Activated CD4-positive, alpha-beta memory T cell treated with anti-CD3 and anti-CD28 coated beads for 36 hours (primary cell): ENCODE measurements at regions of chr2 and their contacts with region 1.

Region 1: GRCh38 chr2:105671156-105671555 is 73.6 kb upstream of the NCK2 start:
- DNase-seq: no peak
- H3K4me3 Mint-ChIP-seq: no peak overlapping the region
- H3K27ac Mint-ChIP-seq: no peak overlapping the region
- H3K4me1 Mint-ChIP-seq: peaks cover 20% of the 10 kb centered on the region
- H3K27me3 Mint-ChIP-seq: peaks cover 3% of the 10 kb centered on the region

Region 2: DNA sequence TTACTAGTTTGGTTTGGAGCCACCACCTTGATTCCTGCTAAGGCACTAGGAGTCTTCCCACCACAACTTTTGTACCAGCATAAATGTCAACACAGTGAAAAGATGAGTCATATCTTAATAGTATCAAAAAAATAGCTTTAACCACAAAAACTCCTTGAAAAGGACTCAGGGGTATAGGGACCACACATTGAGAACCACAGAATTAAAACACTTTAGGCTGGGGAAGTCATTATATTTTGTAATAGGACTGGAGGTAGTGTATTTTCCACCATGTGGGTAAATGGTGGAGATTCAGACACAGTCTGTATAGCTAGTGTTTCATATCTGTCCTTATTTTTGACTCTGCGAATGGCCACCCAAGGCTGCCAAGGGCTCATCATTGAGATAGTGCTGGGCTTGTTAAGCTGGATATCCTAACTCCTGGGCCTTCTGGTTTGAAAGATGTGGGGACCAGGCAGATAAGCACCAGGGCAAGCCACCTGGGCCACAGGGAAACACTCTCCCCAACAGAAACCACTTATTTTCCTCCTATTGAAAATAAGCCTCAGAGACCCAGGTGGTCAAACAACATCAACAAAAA is 253.2 kb before region 1 on chr2:
- CTCF ChIA-PET with region 1: no interaction called
- POLR2A ChIA-PET with region 1: no interaction called
- intact Hi-C with region 1: no loop called
- DNase-seq: no peak
- H3K4me3 Mint-ChIP-seq: no peak overlapping the region
- H3K27ac Mint-ChIP-seq: no peak overlapping the region
- H3K4me1 Mint-ChIP-seq: peaks cover 2% of the 10 kb centered on the region
- H3K27me3 Mint-ChIP-seq: peaks cover 34% of the 10 kb centered on the region

Region 3: DNA sequence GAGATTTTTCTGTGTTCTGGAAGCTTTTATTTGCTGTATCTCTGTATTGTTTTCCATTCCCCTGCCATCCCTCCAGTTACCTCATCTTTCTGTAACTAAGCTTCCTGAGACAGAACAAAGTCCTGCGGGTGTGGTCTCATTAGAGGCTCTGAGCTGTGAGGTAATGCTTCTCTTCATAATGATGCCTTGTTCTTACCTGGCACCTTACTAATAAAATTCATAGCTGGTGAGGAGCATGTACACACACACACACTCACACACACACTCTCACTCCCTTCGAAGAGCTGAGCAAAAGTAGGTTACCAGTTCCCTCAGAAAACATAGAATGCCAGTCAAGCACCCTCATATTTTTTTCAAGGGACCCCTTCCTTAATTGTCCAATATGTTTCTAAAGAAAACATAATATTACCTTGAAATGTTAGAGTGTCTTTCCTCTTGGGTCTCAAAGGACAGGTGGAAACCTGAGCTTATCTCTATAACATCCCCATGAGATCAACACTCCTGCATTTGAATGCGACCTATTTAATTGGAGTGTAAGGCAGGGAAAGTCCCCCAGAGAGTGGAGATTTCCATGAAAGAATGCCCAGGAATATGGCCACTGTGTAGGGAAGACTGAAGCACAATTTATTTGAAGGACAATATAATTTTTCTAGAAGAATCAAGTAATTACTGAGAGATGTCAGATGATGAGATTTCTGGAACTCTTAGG is 88.0 kb before region 1 on chr2:
- CTCF ChIA-PET with region 1: no interaction called
- POLR2A ChIA-PET with region 1: no interaction called
- intact Hi-C with region 1: loop called (anchors 5 kb)
- DNase-seq: no peak
- H3K4me3 Mint-ChIP-seq: no peak overlapping the region
- H3K27ac Mint-ChIP-seq: no peak overlapping the region
- H3K4me1 Mint-ChIP-seq: peaks cover 24% of the 10 kb centered on the region
- H3K27me3 Mint-ChIP-seq: no peaks in the 10 kb centered on the region

Region 4: DNA sequence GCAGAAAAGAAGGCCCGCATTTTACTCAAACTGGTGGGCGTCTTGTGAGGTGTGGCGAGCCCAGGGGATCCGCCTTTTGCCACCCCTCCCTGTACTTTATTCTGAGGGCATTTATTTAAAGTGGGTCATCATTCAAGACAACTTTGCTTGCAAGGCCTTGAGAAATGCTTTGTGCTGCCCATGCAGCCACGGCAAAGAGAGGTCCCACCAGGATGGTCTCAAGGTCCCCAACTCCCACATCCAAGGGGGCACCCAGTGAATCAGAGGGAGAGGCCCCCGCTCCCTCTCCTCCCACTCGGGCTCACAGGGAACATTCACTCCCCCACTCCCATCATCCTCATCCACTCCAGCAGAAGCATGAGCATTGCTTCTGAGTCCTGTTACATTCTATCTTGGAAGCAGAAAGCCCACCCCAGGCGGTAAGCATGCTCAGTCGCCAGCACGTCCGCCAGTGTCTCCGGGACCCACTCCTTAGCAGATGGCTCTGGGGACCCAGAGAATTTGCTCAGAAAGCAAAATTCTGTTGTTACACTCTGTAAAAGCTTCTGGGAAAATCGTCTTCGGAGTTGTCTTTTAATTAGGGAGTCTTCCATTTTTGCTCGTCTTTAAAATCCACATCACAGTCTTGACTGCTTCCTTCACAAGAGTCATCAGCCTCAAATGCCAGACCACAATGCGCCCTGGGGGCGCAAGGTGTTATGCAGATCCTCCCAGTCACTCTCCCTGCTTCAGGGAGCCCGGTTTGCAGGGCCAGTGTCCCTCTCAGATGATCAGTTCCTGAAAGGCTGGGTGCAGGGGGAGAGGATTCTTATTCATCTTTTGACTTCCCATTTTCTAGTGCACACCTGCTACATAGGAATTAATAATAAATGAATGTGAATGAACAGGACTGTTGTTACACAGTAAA is 25.9 kb before region 1 on chr2:
- CTCF ChIA-PET with region 1: no interaction called
- POLR2A ChIA-PET with region 1: no interaction called
- intact Hi-C with region 1: loop called (anchors 2 kb)
- DNase-seq: no peak
- H3K4me3 Mint-ChIP-seq: no peak overlapping the region
- H3K27ac Mint-ChIP-seq: no peak overlapping the region
- H3K4me1 Mint-ChIP-seq: no peaks in the 10 kb centered on the region
- H3K27me3 Mint-ChIP-seq: no peaks in the 10 kb centered on the region

Region 5: GRCh38 chr2:105737980-105738657 is 67.0 kb after region 1 on chr2:
- CTCF ChIA-PET with region 1: no interaction called
- POLR2A ChIA-PET with region 1: no interaction called
- intact Hi-C with region 1: loop called (anchors 1 kb)
- DNase-seq: peak; percentile 55
- H3K4me3 Mint-ChIP-seq: peak overlapping the region; percentile 64
- H3K27ac Mint-ChIP-seq: peak overlapping the region; percentile 96
- H3K4me1 Mint-ChIP-seq: peaks cover 90% of the 10 kb centered on the region
- H3K27me3 Mint-ChIP-seq: no peaks in the 10 kb centered on the region

Region 6: DNA sequence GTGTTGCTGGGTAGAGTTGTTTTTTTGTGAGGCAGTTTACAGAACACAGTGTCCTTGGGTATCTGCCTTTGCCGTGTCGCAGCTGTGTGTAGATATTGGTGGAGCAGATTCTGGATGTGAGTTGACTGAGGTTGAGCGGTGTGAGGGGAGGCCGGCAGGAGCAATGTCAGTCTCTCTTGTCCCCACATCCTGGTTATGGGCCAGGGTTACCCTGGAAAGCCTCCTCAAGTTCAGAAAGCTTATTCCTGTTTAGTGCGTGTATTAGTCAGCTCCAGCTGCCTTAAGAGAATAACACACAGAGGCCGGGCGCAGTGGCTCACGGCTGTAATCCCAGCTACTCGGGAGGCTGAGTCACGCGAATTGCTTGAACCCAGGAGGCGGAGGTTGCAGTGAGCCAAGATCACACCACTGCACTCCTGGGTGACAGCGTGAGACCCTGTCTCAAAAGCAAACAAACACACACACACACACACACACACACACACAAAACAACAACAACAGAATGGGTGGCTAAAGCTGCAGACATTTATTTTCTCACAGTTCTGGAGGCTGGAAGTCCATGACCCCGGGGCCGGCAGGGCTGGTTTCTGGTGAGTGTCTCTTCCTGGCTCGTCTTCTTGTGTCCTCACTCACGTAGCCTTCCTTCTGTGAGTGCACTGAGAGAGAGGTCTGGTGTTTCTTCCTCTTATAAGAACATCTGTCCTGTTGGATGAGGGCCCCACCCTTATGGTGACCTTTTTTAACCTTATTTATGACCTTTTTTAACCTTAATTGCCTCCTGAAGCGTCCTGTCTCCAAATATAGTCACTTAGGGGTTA is 78.6 kb after region 1 on chr2:
- CTCF ChIA-PET with region 1: no interaction called
- POLR2A ChIA-PET with region 1: interaction called, 7 read pairs
- intact Hi-C with region 1: loop called (anchors 2 kb)
- DNase-seq: peak; percentile 82
- H3K4me3 Mint-ChIP-seq: peak overlapping the region; percentile 70
- H3K27ac Mint-ChIP-seq: peak overlapping the region; percentile 99
- H3K4me1 Mint-ChIP-seq: peaks cover 80% of the 10 kb centered on the region
- H3K27me3 Mint-ChIP-seq: no peaks in the 10 kb centered on the region

Region 7: GRCh38 chr2:105797298-105797819 is 126.2 kb after region 1 on chr2:
- CTCF ChIA-PET with region 1: no interaction called
- POLR2A ChIA-PET with region 1: no interaction called
- intact Hi-C with region 1: loop called (anchors 5 kb)
- DNase-seq: peak; percentile 68
- H3K4me3 Mint-ChIP-seq: peak overlapping the region; percentile 52
- H3K27ac Mint-ChIP-seq: peak overlapping the region; percentile 92
- H3K4me1 Mint-ChIP-seq: peaks cover 94% of the 10 kb centered on the region
- H3K27me3 Mint-ChIP-seq: no peaks in the 10 kb centered on the region

Region 8: GRCh38 chr2:105919826-105920225 is 248.7 kb after region 1 on chr2:
- CTCF ChIA-PET with region 1: no interaction called
- POLR2A ChIA-PET with region 1: no interaction called
- intact Hi-C with region 1: loop called (anchors 10 kb)
- DNase-seq: peak; percentile 77
- H3K4me3 Mint-ChIP-seq: no peak overlapping the region
- H3K27ac Mint-ChIP-seq: no peak overlapping the region
- H3K4me1 Mint-ChIP-seq: peaks cover 16% of the 10 kb centered on the region
- H3K27me3 Mint-ChIP-seq: no peaks in the 10 kb centered on the region

Region 9: GRCh38 chr2:106261871-106262321 is 590.7 kb after region 1 on chr2:
- CTCF ChIA-PET with region 1: no interaction called
- POLR2A ChIA-PET with region 1: no interaction called
- intact Hi-C with region 1: no loop called
- DNase-seq: no peak
- H3K4me3 Mint-ChIP-seq: no peak overlapping the region
- H3K27ac Mint-ChIP-seq: no peak overlapping the region
- H3K4me1 Mint-ChIP-seq: peaks cover 7% of the 10 kb centered on the region
- H3K27me3 Mint-ChIP-seq: peaks cover 3% of the 10 kb centered on the region